Esophagus muscularis mucosa (tissue), 4 donors: ENCODE measurements at regions of chr6 and their contacts with region 1.

Region 1: DNA sequence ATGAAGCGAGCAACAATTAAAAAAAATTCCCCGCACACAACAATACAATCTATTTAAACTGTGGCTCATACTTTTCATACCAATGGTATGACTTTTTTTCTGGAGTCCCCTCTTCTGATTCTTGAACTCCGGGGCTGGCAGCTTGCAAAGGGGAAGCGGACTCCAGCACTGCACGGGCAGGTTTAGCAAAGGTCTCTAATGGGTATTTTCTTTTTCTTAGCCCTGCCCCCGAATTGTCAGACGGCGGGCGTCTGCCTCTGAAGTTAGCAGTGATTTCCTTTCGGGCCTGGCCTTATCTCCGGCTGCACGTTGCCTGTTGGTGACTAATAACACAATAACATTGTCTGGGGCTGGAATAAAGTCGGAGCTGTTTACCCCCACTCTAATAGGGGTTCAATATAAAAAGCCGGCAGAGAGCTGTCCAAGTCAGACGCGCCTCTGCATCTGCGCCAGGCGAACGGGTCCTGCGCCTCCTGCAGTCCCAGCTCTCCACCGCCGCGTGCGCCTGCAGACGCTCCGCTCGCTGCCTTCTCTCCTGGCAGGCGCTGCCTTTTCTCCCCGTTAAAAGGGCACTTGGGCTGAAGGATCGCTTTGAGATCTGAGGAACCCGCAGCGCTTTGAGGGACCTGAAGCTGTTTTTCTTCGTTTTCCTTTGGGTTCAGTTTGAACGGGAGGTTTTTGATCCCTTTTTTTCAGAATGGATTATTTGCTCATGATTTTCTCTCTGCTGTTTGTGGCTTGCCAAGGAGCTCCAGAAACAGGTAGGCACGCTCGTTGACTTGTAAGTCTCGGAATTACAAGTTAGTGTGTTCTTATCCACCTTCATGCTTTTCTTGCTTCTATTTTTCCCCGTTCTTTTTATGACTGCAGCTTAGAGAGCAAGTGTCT is at the start of gene EDN1:
- DNase-seq: no peak
- H3K4me3 ChIP-seq: peak within 1 kb of the TSS; percentile 50 to 66 (median 56)
- H3K27ac ChIP-seq: peak within 1 kb of the TSS; percentile 53 to 74 (median 66)
- H3K4me1 ChIP-seq: peaks cover 7 to 25% (median 25%) of the 10 kb centered on the region in 4 donors
- H3K27me3 ChIP-seq: peaks cover 0 to 22% (median 0%) of the 10 kb centered on the region in 4 donors
- CTCF ChIP-seq: peak in 2 of 3 experiments; percentile 37 to 70
- EP300 ChIP-seq: no peak
- POLR2A ChIP-seq: no peak
- total RNA-seq, gene EDN1: 5.4 to 29.1 (median 23.0) TPM

Region 2: GRCh38 chr6:11654876-11655275 is 635.3 kb before region 1 on chr6:
- intact Hi-C with region 1: loop called (anchors 2 kb)
- DNase-seq: no peak
- H3K4me3 ChIP-seq: no peak overlapping the region
- H3K27ac ChIP-seq: no peak overlapping the region
- H3K4me1 ChIP-seq: peaks cover 28 to 42% (median 34%) of the 10 kb centered on the region in 4 donors
- H3K27me3 ChIP-seq: no peaks in the 10 kb centered on the region
- CTCF ChIP-seq: no peak
- EP300 ChIP-seq: no peak
- POLR2A ChIP-seq: no peak